CD8-positive, alpha-beta memory T cell (primary cell): ENCODE measurements at regions of chr9 and their contacts with region 1.

Region 1: GRCh38 chr9:137578518-137579258 is at the start of gene DPH7:
- DNase-seq: peak; percentile 89 to 97 (median 94)
- H3K4me3 ChIP-seq: peak within 1 kb of the TSS; percentile 78
- H3K4me3 Mint-ChIP-seq: peak within 1 kb of the TSS; percentile 79 to 91 (median 83)
- H3K27ac ChIP-seq: peak within 1 kb of the TSS; percentile 65
- H3K27ac Mint-ChIP-seq: peak within 1 kb of the TSS; percentile 41 to 93 (median 79)
- H3K4me1 ChIP-seq: peaks cover 26% of the 10 kb centered on the region
- H3K4me1 Mint-ChIP-seq: peaks cover 29 to 41% (median 31%) of the 10 kb centered on the region in 3 donors
- H3K27me3 ChIP-seq: no peaks in the 10 kb centered on the region
- H3K27me3 Mint-ChIP-seq: peaks cover 0 to 3% of the 10 kb centered on the region in 2 donors
- total RNA-seq, gene DPH7: 37.3 to 38.2 TPM

Region 2: DNA sequence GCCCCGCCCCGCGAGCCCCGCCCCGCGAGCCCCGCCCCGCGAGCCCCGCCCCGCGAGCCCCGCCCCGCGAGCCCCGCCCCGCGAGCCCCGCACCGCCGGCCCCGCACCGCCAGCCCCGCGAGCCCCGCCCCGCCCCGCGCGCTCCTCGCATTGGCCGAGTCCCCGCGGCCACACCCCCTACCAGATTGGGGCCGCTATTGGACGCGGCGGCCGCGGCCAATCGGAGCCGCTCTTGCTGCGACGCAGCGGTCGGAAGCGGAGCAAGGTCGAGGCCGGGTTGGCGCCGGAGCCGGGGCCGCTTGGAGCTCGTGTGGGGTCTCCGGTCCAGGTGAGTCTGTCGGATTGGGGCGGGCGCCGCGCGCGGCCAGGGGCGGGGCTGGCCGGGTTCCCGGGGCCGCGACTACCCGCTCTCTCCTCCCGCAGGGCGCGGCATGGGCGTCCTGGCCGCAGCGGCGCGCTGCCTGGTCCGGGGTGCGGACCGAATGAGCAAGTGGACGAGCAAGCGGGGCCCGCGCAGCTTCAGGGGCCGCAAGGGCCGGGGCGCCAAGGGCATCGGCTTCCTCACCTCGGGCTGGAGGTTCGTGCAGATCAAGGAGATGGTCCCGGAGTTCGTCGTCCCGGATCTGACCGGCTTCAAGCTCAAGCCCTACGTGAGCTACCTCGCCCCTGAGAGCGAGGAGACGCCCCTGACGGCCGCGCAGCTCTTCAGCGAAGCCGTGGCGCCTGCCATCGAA is 26.9 kb before region 1 on chr9 and contains the start of gene MRPL41:
- CTCF ChIA-PET with region 1: interaction called, 12 read pairs
- POLR2A ChIA-PET with region 1: interaction called, 5 read pairs
- DNase-seq: peak; percentile 83 to 92 (median 90)
- H3K4me3 ChIP-seq: peak within 1 kb of the TSS; percentile 62
- H3K4me3 Mint-ChIP-seq: peak within 1 kb of the TSS; percentile 81 to 92 (median 86)
- H3K27ac ChIP-seq: peak within 1 kb of the TSS; percentile 62
- H3K27ac Mint-ChIP-seq: peak within 1 kb of the TSS; percentile 77 to 93 (median 84)
- H3K4me1 ChIP-seq: peaks cover 14% of the 10 kb centered on the region
- H3K4me1 Mint-ChIP-seq: peaks cover 10 to 20% (median 13%) of the 10 kb centered on the region in 3 donors
- H3K27me3 ChIP-seq: no peaks in the 10 kb centered on the region
- H3K27me3 Mint-ChIP-seq: no peaks in the 10 kb centered on the region
- total RNA-seq, gene MRPL41: 65.9 to 68.2 TPM

Region 3: DNA sequence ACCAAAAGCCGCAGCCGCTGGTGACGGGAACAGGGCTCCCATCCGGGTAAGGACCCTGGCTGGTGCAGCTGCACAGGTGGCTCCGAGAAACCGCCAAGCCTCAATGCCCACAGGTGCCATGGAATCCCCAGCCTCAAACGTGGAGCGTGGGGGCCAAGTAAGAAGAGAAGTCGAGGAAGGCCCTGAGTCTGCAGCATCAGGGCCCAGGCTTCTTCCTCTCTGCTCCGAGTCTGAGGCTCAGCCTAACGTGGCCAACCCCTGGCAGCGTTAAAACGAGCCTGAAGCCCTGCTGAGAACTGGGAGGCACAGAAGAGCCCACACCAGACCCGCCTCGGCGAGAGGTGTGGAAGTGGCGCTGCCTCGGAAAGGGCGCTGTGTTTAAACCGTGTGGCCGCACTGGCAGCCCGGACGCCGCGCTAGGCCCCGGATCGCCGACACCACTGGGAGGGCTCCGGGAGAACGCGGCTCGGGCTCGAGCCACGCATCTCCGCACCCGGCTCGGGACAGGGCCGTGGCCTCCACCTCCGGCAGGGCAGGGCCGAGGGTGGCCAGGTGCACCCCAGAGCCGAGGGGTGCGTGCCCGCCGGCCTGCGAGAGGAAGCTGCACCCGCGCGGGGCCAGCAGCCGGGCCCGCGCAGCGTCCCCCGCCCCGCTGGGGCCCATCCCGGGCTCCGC is 10.9 kb after region 1 on chr9:
- CTCF ChIA-PET with region 1: interaction called, 10 read pairs
- POLR2A ChIA-PET with region 1: no interaction called
- DNase-seq: peak in 1 of 5 donors; percentile 24
- H3K4me3 ChIP-seq: no peak overlapping the region
- H3K4me3 Mint-ChIP-seq: peak overlapping the region; percentile 81 to 91 (median 83)
- H3K27ac ChIP-seq: peak overlapping the region; percentile 57
- H3K27ac Mint-ChIP-seq: peak overlapping the region in 3 of 8 donors; percentile 82 to 85 (median 84)
- H3K4me1 ChIP-seq: peaks cover 15% of the 10 kb centered on the region
- H3K4me1 Mint-ChIP-seq: peaks cover 11 to 22% (median 11%) of the 10 kb centered on the region in 3 donors
- H3K27me3 ChIP-seq: no peaks in the 10 kb centered on the region
- H3K27me3 Mint-ChIP-seq: no peaks in the 10 kb centered on the region

Region 4: GRCh38 chr9:137605121-137606004 is 26.7 kb after region 1 on chr9 and contains the start of gene ARRDC1:
- CTCF ChIA-PET with region 1: interaction called, 13 read pairs
- POLR2A ChIA-PET with region 1: interaction called, 5 read pairs
- DNase-seq: peak; percentile 86 to 97 (median 91)
- H3K4me3 ChIP-seq: peak within 1 kb of the TSS; percentile 56
- H3K4me3 Mint-ChIP-seq: peak within 1 kb of the TSS; percentile 37 to 91 (median 80)
- H3K27ac ChIP-seq: peak within 1 kb of the TSS; percentile 67
- H3K27ac Mint-ChIP-seq: peak within 1 kb of the TSS in 2 of 8 donors; percentile 60 to 75
- H3K4me1 ChIP-seq: peaks cover 14% of the 10 kb centered on the region
- H3K4me1 Mint-ChIP-seq: peaks cover 14 to 31% (median 17%) of the 10 kb centered on the region in 3 donors
- H3K27me3 ChIP-seq: no peaks in the 10 kb centered on the region
- H3K27me3 Mint-ChIP-seq: no peaks in the 10 kb centered on the region
- total RNA-seq, gene ARRDC1: 30.8 to 35.2 TPM